Body of pancreas (tissue), 4 donors: ENCODE measurements at regions of chr1 and their contacts with region 1.

Region 1: DNA sequence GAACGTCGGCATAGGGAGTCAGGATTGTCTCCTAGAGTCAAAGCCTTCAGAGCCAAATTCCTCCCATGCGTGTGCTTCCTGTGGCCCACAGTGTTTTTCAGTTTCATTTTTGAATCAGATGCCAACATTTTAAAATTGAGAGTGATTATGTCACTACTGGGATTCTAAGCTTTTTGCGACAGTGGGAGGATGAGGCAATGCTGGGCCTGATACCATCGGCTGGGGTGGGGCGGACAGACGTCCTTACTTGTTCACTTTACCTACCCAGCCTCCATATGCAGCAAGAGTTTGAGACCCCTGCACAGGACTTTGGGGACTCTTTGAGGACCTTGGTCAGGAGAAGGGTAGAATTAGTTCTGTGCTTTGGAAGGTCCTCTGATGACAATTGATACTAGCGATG is 1.2 kb upstream of the KLHDC7A start:
- DNase-seq: no peak
- ATAC-seq: no peak
- H3K4me3 ChIP-seq: no peak overlapping the region
- H3K27ac ChIP-seq: peak overlapping the region in 3 of 4 donors; percentile 81 to 88 (median 85)
- H3K4me1 ChIP-seq: peaks cover 44% of the 10 kb centered on the region
- H3K27me3 ChIP-seq: no peaks in the 10 kb centered on the region
- CTCF ChIP-seq: no peak
- POLR2A ChIP-seq: no peak

Region 2: GRCh38 chr1:18100491-18101063 is 378.9 kb before region 1 on chr1:
- intact Hi-C with region 1: no loop called
- DNase-seq: peak; percentile 64 to 77 (median 76)
- ATAC-seq: peak; percentile 64
- H3K4me3 ChIP-seq: no peak overlapping the region
- H3K27ac ChIP-seq: no peak overlapping the region
- H3K4me1 ChIP-seq: no peaks in the 10 kb centered on the region
- H3K27me3 ChIP-seq: peaks cover 0 to under 1% of the 10 kb centered on the region in 2 donors
- CTCF ChIP-seq: peak; percentile 70 to 91 (median 80)
- POLR2A ChIP-seq: no peak

Region 3: DNA sequence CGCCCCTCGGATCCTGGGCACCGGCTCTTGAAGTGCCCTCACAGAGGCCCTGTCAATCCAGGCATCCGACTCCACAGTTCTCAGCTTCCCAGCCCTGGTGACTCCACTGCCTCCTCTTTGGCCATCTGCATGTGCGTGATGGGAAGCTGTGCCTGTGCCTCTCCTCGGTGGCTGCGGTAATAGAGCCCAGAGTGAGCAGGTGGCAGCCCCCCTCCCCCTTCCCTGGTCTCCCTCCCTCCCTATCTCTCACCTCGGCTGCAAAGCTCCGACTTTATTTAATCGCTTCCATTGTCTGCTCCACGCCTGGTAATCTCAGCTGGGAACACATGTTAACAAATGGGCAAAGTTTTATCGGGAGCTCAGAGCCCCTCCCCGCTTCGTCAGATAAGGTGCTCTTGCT is 280.0 kb before region 1 on chr1:
- intact Hi-C with region 1: no loop called
- DNase-seq: no peak
- ATAC-seq: no peak
- H3K4me3 ChIP-seq: no peak overlapping the region
- H3K27ac ChIP-seq: no peak overlapping the region
- H3K4me1 ChIP-seq: no peaks in the 10 kb centered on the region
- H3K27me3 ChIP-seq: peaks cover 0 to 18% of the 10 kb centered on the region in 2 donors
- CTCF ChIP-seq: no peak
- POLR2A ChIP-seq: no peak

Region 4: GRCh38 chr1:18309552-18310155 is 169.8 kb before region 1 on chr1:
- intact Hi-C with region 1: no loop called
- DNase-seq: no peak
- ATAC-seq: no peak
- H3K4me3 ChIP-seq: no peak overlapping the region
- H3K27ac ChIP-seq: no peak overlapping the region
- H3K4me1 ChIP-seq: no peaks in the 10 kb centered on the region
- H3K27me3 ChIP-seq: no peaks in the 10 kb centered on the region
- CTCF ChIP-seq: no peak
- POLR2A ChIP-seq: no peak

Region 5: DNA sequence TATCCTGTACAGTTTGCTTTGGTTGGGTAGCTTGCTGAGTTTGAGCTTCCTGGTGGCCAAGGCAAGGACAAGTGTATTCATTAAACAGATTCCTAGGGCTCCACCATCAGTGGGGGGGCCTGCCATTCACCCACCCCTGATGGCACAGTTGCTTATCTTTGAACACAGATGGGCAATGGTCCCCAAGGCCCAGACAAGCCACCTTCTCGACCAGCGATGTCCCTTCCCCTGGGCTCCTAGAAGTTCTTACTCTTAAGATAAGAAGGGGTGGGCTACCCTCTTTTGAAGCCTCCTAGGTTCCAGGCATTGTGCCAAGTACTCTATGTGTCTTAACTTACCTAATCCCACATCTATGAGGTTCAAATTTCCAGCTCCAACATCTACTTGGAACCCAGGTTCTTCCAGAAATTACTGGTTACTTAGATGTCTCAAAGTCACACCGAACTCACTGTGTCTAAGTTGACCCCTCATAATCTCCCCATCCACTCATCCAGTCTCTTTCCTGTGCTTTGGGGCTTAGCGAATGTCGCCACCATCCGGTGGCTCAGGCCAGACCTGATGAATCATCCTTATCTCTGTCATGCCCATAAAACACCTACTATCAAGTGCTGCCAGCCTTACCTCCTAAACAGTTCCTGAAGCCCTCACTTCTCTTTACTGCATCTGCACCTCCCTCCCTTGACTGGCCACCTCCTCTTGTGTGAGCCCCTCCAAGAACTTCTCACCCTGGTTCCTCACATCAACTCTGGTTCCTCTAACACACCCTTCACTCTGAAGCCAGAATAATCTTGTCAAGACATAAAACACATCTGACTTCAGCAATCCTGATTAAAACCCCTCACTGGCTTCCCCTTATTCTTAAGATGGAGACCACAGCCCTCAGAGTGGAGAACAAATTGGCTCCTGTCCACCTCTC is 51.4 kb after region 1 on chr1:
- intact Hi-C with region 1: loop called (anchors 10 kb)
- DNase-seq: peak in 1 of 4 donors; percentile 8
- ATAC-seq: no peak
- H3K4me3 ChIP-seq: no peak overlapping the region
- H3K27ac ChIP-seq: no peak overlapping the region
- H3K4me1 ChIP-seq: peaks cover 14% of the 10 kb centered on the region
- H3K27me3 ChIP-seq: no peaks in the 10 kb centered on the region
- CTCF ChIP-seq: peak in 2 of 7 experiments; percentile 8 to 26
- POLR2A ChIP-seq: no peak

Region 6: DNA sequence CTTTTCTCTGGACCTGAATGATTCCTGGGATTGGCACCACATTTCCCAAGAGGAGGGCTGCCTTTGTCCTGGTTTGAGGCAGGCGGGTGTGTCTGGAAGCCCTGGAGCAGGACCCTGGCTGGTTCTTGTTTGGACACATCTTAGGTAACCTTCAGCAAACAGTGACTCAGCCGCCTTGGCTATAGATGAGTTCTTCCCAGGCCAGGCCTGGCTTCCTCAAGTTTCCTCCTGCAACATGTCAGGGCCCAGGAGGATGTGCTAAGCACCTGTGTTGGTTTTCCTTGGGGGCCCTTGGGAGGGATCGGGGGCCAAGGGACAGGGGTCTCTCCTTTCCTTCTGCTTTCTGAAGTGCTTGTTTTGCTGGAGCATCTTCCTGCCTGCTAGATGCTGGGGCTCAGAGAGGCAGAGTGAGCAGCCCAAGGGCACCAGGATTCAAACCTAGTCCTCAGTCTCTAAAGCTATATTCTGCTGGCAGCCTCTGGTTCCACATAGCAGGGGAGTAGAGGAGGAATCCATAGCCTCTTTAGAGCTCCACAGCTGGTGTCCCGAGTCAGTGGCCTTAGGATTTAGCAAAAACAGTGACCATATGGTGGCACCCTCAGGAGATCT is 189.4 kb after region 1 on chr1:
- intact Hi-C with region 1: no loop called
- DNase-seq: peak in 1 of 4 donors; percentile 27
- ATAC-seq: no peak
- H3K4me3 ChIP-seq: no peak overlapping the region
- H3K27ac ChIP-seq: no peak overlapping the region
- H3K4me1 ChIP-seq: peaks cover 10% of the 10 kb centered on the region
- H3K27me3 ChIP-seq: no peaks in the 10 kb centered on the region
- CTCF ChIP-seq: no peak
- POLR2A ChIP-seq: no peak